ENCODE measurements at regions of chr6 and their contacts with region 1.

Region 1: GRCh38 chr6:45421709-45422502 is 44.2 kb upstream of the SUPT3H start:
- DNase-seq: peak; percentile 67
- ATAC-seq: peak; percentile 81
- H3K4me3 ChIP-seq: peak overlapping the region; percentile 99
- H3K27ac ChIP-seq: peak overlapping the region; percentile 95
- H3K4me1 ChIP-seq: peaks cover 11% of the 10 kb centered on the region
- H3K27me3 ChIP-seq: no peaks in the 10 kb centered on the region
- CTCF ChIP-seq: peak; percentile 38
- POLR2A ChIP-seq: no peak
- RAD21 ChIP-seq: peak; percentile 42

Region 2: DNA sequence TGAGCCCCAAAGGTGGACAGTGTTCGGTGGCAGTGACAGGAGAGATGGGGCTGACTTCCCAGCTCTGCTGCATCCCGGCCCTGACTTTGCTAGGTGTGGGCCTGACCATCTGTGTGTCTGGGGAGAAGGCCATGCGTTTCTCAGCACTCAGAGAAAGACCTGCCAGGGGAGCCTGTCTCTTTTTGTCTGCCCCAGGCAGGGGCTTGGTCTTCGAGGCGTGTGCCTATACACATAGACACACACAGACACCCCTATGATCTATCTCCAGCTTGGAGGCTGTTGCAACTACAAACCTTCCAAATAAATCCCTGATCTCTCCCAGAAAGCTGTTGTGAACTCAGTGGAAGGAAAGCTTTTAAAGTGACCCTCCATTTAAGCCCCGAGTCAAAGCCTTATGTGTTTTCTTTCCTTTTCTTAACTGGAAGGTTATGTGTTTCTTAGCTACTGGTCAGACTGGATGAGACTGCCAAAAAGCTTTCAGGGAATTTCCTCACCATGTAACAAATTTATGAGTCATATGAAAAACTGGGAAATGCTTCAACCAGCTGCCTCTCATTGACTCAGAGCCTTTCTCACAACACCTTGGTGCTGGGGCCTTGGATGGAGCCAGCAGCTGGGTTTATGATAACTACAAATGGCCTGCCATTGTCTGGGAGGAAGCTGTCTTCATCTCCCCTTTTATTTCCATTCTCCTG is 931.8 kb before region 1 on chr6:
- CTCF ChIA-PET with region 1: no interaction called
- POLR2A ChIA-PET with region 1: no interaction called
- dilution Hi-C with region 1: no loop called
- in situ Hi-C with region 1: loop called (anchors 10 kb)
- intact Hi-C with region 1: no loop called
- DNase-seq: peak; percentile 99
- ATAC-seq: peak; percentile 85
- H3K4me3 ChIP-seq: peak overlapping the region; percentile 9; the same call in 1 of the 2 replicates
- H3K27ac ChIP-seq: peak overlapping the region; percentile 68
- H3K4me1 ChIP-seq: peaks cover 14% of the 10 kb centered on the region
- H3K27me3 ChIP-seq: peaks cover 4% of the 10 kb centered on the region; the same call in 1 of the 2 replicates
- CTCF ChIP-seq: no peak
- POLR2A ChIP-seq: peak; percentile 58
- RAD21 ChIP-seq: no peak

Region 3: DNA sequence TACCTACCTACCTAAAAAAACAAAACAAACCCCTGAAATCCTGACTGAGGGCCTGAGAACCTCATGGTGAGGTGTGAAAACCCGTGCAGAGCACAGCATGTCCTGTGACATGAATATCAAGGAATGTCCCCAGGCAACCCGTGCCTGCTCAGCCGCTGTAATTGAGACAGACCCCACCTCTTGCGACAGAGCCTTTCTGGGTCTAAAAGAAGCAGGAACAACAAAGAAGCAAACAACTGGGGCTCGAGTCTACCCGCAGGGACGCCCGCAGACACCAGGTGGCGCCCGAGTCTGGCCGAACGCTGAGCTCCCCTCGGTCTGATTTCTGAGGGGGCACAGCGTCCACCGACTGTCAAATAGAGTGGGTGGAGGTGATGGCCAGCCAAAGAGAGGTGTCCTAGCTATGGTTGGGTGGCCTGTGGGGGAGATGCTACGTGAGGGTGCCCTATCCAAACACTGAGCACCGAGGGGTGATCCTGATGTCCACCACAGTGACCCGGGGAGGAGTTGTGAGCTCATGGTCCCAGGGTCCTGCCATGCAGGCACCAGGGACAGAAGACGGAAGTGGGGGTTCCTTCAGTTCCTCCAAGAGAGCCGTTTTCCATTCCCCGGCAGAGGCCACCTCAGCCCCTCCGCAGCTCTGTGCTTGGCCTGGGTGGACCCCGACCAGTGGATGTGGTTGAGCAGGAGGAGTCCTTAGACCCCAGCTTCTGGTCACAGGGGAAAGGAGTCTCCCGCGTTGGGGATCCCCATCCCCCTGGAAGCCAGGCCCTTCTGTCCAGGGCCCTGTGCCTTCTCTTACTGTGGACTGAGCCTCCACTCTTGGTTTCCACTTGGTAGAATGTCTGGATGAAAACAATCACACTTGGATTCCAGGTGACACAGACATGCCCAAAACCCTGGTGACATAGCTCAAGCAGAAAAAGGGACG is 766.2 kb before region 1 on chr6:
- CTCF ChIA-PET with region 1: interaction called, 4 read pairs
- POLR2A ChIA-PET with region 1: no interaction called
- dilution Hi-C with region 1: no loop called
- in situ Hi-C with region 1: loop called (anchors 5 kb)
- intact Hi-C with region 1: loop called (anchors 1 kb)
- DNase-seq: peak; percentile 28
- ATAC-seq: peak; percentile 70
- H3K4me3 ChIP-seq: no peak overlapping the region
- H3K27ac ChIP-seq: no peak overlapping the region
- H3K4me1 ChIP-seq: peaks cover 10% of the 10 kb centered on the region
- H3K27me3 ChIP-seq: no peaks in the 10 kb centered on the region
- CTCF ChIP-seq: peak; percentile 90
- POLR2A ChIP-seq: no peak
- RAD21 ChIP-seq: peak; percentile 93

Region 4: GRCh38 chr6:45483021-45483420 is 61.1 kb after region 1 on chr6:
- CTCF ChIA-PET with region 1: no interaction called
- POLR2A ChIA-PET with region 1: no interaction called
- dilution Hi-C with region 1: no loop called
- in situ Hi-C with region 1: no loop called
- intact Hi-C with region 1: loop called (anchors 2 kb)
- DNase-seq: peak; percentile 98
- ATAC-seq: peak; percentile 88
- H3K4me3 ChIP-seq: no peak overlapping the region
- H3K27ac ChIP-seq: no peak overlapping the region; the same call in 1 of the 2 replicates
- H3K4me1 ChIP-seq: peaks cover 15% of the 10 kb centered on the region
- H3K27me3 ChIP-seq: no peaks in the 10 kb centered on the region
- CTCF ChIP-seq: no peak
- POLR2A ChIP-seq: no peak
- RAD21 ChIP-seq: no peak

Region 5: GRCh38 chr6:45555981-45556771 is 134.3 kb after region 1 on chr6:
- CTCF ChIA-PET with region 1: no interaction called
- POLR2A ChIA-PET with region 1: no interaction called
- dilution Hi-C with region 1: no loop called
- in situ Hi-C with region 1: no loop called
- intact Hi-C with region 1: loop called (anchors 5 kb)
- DNase-seq: peak; percentile 60
- ATAC-seq: peak; percentile 64
- H3K4me3 ChIP-seq: peak overlapping the region; percentile 37
- H3K27ac ChIP-seq: peak overlapping the region; percentile 62
- H3K4me1 ChIP-seq: peaks cover 16% of the 10 kb centered on the region
- H3K27me3 ChIP-seq: no peaks in the 10 kb centered on the region
- CTCF ChIP-seq: no peak
- POLR2A ChIP-seq: no peak
- RAD21 ChIP-seq: no peak

Region 6: GRCh38 chr6:45714741-45715507 is 293.0 kb after region 1 on chr6:
- CTCF ChIA-PET with region 1: interaction called, 10 read pairs
- POLR2A ChIA-PET with region 1: no interaction called
- dilution Hi-C with region 1: no loop called
- in situ Hi-C with region 1: loop called (anchors 5 kb)
- intact Hi-C with region 1: loop called (anchors 1 kb)
- DNase-seq: peak; percentile 91
- ATAC-seq: peak; percentile 91
- H3K4me3 ChIP-seq: no peak overlapping the region
- H3K27ac ChIP-seq: no peak overlapping the region
- H3K4me1 ChIP-seq: peaks cover 15% of the 10 kb centered on the region
- H3K27me3 ChIP-seq: no peaks in the 10 kb centered on the region
- CTCF ChIP-seq: peak; percentile 94
- POLR2A ChIP-seq: 0 out of 2 replicates have a peak, but pooled peaks have one; percentile 58
- RAD21 ChIP-seq: peak; percentile 99

Measured in IMR-90 (cell line).